Transverse colon (tissue), 4 donors: ENCODE measurements at regions of chr1 and their contacts with region 1.

Region 1: GRCh38 chr1:180154325-180155181 is at the start of gene QSOX1:
- DNase-seq: peak; percentile 92
- H3K4me3 ChIP-seq: peak within 1 kb of the TSS; percentile 73 to 98 (median 87)
- H3K27ac ChIP-seq: peak within 1 kb of the TSS; percentile 87 to 94 (median 92)
- H3K4me1 ChIP-seq: peaks cover 4 to 49% (median 38%) of the 10 kb centered on the region in 4 donors
- H3K27me3 ChIP-seq: no peaks in the 10 kb centered on the region
- CTCF ChIP-seq: peak in 1 of 5 experiments; percentile 33
- EP300 ChIP-seq: no peak
- POLR2A ChIP-seq: peak; percentile 91
- total RNA-seq, gene QSOX1: 109 to 124 (median 119) TPM

Region 2: DNA sequence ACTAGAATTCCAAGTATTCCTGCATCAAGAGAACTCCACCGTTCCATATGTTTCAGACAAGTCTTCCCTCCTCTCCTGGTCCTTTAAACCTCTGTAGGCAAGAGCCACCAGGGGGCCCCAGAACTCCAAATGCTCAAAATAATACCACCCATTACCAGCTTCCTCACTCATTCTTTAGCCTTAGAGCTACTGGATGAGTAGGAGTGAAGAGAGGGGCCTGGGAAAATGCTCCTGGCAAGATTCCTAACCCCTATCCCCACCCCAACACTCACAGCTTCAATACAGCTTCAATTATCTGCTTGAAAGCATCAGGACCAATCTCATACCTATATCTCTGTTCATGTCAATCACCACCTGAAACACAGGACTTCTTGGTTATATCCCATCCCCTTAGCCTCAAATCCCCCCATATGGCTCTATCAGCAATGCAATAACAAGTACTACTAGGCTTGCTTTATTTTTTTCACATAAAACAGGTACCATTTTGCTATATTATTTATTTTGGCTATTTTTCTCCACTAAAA is 286.7 kb before region 1 on chr1:
- in situ Hi-C with region 1: loop called in 2 of 4 experiments (anchors 10 to 25 kb)
- intact Hi-C with region 1: no loop called
- DNase-seq: peak; percentile 61
- H3K4me3 ChIP-seq: no peak overlapping the region
- H3K27ac ChIP-seq: no peak overlapping the region
- H3K4me1 ChIP-seq: peaks cover 3 to 22% (median 7%) of the 10 kb centered on the region in 4 donors
- H3K27me3 ChIP-seq: no peaks in the 10 kb centered on the region
- CTCF ChIP-seq: peak; percentile 42 to 67 (median 59)
- EP300 ChIP-seq: no peak
- POLR2A ChIP-seq: no peak

Region 3: DNA sequence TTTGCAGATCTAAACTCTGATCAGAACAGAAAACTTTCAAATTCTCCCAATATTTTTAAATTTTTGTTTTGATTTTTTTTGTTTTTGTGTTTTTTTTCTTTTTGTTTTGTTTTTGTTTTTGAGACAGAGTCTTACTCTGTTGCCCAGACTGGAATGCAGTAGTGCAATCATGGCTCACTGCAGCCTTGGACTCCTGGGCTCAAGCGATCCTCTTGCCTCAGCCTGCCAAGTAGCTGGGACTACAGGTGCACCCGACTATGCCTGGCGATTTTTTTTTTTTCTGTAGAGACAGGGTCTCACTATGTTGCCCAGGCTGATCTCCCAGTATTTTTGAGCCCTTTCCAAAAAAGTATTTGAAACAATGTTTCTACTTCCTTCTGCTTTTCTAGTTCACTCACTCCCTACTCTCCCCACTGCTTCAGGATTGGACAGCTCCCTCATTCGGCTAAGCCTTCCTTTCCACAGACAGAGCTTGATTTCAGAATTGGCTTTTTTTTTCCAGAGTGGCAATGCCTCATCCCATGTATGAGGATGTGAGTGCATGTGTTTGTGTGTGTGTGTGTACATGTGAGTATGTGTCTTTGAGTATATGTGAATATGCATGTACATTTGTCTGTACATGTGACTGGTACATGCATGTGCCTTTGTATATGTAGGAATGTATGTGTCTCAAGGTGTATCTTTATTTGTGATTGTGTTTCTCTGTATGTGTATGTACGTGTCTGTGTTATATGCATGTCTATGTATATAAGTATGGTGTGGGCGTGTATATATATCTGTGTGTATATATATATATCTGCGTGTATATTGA is 87.4 kb after region 1 on chr1:
- in situ Hi-C with region 1: no loop called
- intact Hi-C with region 1: no loop called
- DNase-seq: no peak
- H3K4me3 ChIP-seq: no peak overlapping the region
- H3K27ac ChIP-seq: no peak overlapping the region
- H3K4me1 ChIP-seq: peaks cover 0 to 6% (median 0%) of the 10 kb centered on the region in 4 donors
- H3K27me3 ChIP-seq: peaks cover 76% of the 10 kb centered on the region
- CTCF ChIP-seq: no peak
- EP300 ChIP-seq: no peak
- POLR2A ChIP-seq: no peak